Caco-2 (cell line): ENCODE measurements at regions of chr1 and their contacts with region 1.

Region 1: GRCh38 chr1:150578965-150579798 is at the start of gene MCL1:
- DNase-seq: peak; percentile 96
- H3K4me3 ChIP-seq: peak within 1 kb of the TSS; percentile 95
- H3K4me3 Mint-ChIP-seq: peak within 1 kb of the TSS; percentile 100
- H3K27ac Mint-ChIP-seq: peak within 1 kb of the TSS; percentile 98
- H3K4me1 ChIP-seq: peaks cover 33% of the 10 kb centered on the region
- H3K4me1 Mint-ChIP-seq: peaks cover 34% of the 10 kb centered on the region
- H3K27me3 ChIP-seq: no peaks in the 10 kb centered on the region
- H3K27me3 Mint-ChIP-seq: no peaks in the 10 kb centered on the region
- CTCF ChIP-seq: peak in 1 of 2 experiments; percentile 10
- total RNA-seq, gene MCL1: 130 and 134 TPM in 2 replicates

Region 2: DNA sequence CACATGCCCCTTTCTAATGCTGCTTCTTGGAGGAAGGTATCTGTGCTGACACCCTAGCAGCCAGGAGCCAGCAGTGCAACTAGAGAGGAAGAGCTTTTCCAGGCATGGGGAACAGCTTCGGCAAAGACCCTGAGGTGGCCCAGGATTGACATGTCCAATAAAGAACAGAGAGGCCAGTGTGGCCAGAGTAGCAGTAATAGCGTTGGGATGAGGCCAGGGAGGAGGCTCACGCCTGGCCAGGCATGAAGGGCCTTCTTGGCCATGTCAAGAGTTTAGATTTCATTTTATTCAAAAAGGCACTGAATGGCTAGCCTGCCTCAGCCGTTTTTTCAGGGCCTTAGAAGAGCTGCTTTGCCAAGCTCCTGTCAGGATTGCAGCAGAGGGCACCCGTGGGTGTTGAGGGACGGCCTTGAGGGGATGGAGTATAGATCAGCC is 46.3 kb before region 1 on chr1:
- CTCF ChIA-PET with region 1: no interaction called
- POLR2A ChIA-PET with region 1: interaction called, 17 read pairs
- intact Hi-C with region 1: no loop called
- DNase-seq: no peak
- H3K4me3 ChIP-seq: no peak overlapping the region
- H3K4me3 Mint-ChIP-seq: peak overlapping the region; percentile 66
- H3K27ac Mint-ChIP-seq: peak overlapping the region; percentile 91
- H3K4me1 ChIP-seq: peaks cover 55% of the 10 kb centered on the region
- H3K4me1 Mint-ChIP-seq: peaks cover 45% of the 10 kb centered on the region
- H3K27me3 ChIP-seq: no peaks in the 10 kb centered on the region
- H3K27me3 Mint-ChIP-seq: no peaks in the 10 kb centered on the region
- CTCF ChIP-seq: no peak

Region 3: GRCh38 chr1:150603711-150604110 is 24.5 kb after region 1 on chr1:
- CTCF ChIA-PET with region 1: interaction called, 3 read pairs
- POLR2A ChIA-PET with region 1: interaction called, 16 read pairs
- intact Hi-C with region 1: loop called (anchors 2 kb)
- DNase-seq: no peak
- H3K4me3 ChIP-seq: no peak overlapping the region
- H3K4me3 Mint-ChIP-seq: no peak overlapping the region
- H3K27ac Mint-ChIP-seq: peak overlapping the region; percentile 95
- H3K4me1 ChIP-seq: peaks cover 15% of the 10 kb centered on the region
- H3K4me1 Mint-ChIP-seq: peaks cover 16% of the 10 kb centered on the region
- H3K27me3 ChIP-seq: no peaks in the 10 kb centered on the region
- H3K27me3 Mint-ChIP-seq: no peaks in the 10 kb centered on the region
- CTCF ChIP-seq: no peak

Region 4: GRCh38 chr1:150621497-150622302 is 42.5 kb after region 1 on chr1:
- CTCF ChIA-PET with region 1: interaction called, 7 read pairs
- POLR2A ChIA-PET with region 1: interaction called, 8 read pairs
- intact Hi-C with region 1: loop called (anchors 2 kb)
- DNase-seq: peak in 1 of 2 experiments; percentile 52
- H3K4me3 ChIP-seq: no peak overlapping the region
- H3K4me3 Mint-ChIP-seq: no peak overlapping the region
- H3K27ac Mint-ChIP-seq: no peak overlapping the region
- H3K4me1 ChIP-seq: 0 out of 2 replicates have a peak, but pooled peaks cover 4% of the 10 kb centered on the region
- H3K4me1 Mint-ChIP-seq: peaks cover 21% of the 10 kb centered on the region
- H3K27me3 ChIP-seq: no peaks in the 10 kb centered on the region
- H3K27me3 Mint-ChIP-seq: no peaks in the 10 kb centered on the region
- CTCF ChIP-seq: peak; percentile 63 to 68

Region 5: GRCh38 chr1:150696590-150697524 is 117.7 kb after region 1 on chr1 and contains the start of gene GOLPH3L:
- CTCF ChIA-PET with region 1: interaction called, 6 read pairs
- POLR2A ChIA-PET with region 1: interaction called, 10 read pairs
- intact Hi-C with region 1: no loop called
- DNase-seq: peak; percentile 96 to 98
- H3K4me3 ChIP-seq: peak within 1 kb of the TSS; percentile 65
- H3K4me3 Mint-ChIP-seq: peak within 1 kb of the TSS; percentile 98
- H3K27ac Mint-ChIP-seq: peak within 1 kb of the TSS; percentile 97
- H3K4me1 ChIP-seq: no peaks in the 10 kb centered on the region; the same call in 1 of the 2 replicates
- H3K4me1 Mint-ChIP-seq: peaks cover 7% of the 10 kb centered on the region
- H3K27me3 ChIP-seq: no peaks in the 10 kb centered on the region
- H3K27me3 Mint-ChIP-seq: no peaks in the 10 kb centered on the region
- CTCF ChIP-seq: no peak
- total RNA-seq, gene GOLPH3L: 13.3 and 14.7 TPM in 2 replicates

Region 6: DNA sequence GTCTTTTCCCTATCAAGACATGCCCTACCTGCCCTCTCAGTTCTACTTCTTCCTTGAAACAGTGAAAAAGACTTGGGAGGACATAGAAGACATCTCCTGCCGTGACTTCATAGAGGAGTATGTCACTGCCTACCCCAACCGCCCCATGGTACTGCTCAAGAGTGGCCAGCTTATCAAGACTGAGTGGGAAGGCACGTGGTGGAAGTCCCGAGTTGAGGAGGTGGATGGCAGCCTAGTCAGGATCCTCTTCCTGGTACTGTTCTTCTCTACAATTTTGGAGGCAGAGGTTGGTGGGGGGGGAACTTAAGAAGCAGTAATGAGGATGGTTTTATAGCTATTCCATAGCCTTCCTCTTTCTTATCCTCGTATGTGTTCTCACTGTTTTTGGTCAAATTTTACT is 365.7 kb after region 1 on chr1:
- CTCF ChIA-PET with region 1: no interaction called
- POLR2A ChIA-PET with region 1: no interaction called
- intact Hi-C with region 1: no loop called
- DNase-seq: no peak
- H3K4me3 ChIP-seq: no peak overlapping the region
- H3K4me3 Mint-ChIP-seq: no peak overlapping the region
- H3K27ac Mint-ChIP-seq: no peak overlapping the region
- H3K4me1 ChIP-seq: no peaks in the 10 kb centered on the region
- H3K4me1 Mint-ChIP-seq: no peaks in the 10 kb centered on the region
- H3K27me3 ChIP-seq: no peaks in the 10 kb centered on the region
- H3K27me3 Mint-ChIP-seq: no peaks in the 10 kb centered on the region
- CTCF ChIP-seq: no peak